Motor neuron (in vitro differentiated cells): ENCODE measurements at regions of chr5 and their contacts with region 1.

Region 1: GRCh38 chr5:172958331-172959046 is 735 bp upstream of the RPL26L1 start:
- ATAC-seq: peak; percentile 37 to 69 (median 58)
- H3K4me3 ChIP-seq: peak overlapping the region; percentile 56 to 90 (median 74)
- H3K27ac ChIP-seq: peak overlapping the region; percentile 28 to 56
- H3K4me1 ChIP-seq: peaks cover 5 to 7% of the 10 kb centered on the region in 2 donors

Region 2: DNA sequence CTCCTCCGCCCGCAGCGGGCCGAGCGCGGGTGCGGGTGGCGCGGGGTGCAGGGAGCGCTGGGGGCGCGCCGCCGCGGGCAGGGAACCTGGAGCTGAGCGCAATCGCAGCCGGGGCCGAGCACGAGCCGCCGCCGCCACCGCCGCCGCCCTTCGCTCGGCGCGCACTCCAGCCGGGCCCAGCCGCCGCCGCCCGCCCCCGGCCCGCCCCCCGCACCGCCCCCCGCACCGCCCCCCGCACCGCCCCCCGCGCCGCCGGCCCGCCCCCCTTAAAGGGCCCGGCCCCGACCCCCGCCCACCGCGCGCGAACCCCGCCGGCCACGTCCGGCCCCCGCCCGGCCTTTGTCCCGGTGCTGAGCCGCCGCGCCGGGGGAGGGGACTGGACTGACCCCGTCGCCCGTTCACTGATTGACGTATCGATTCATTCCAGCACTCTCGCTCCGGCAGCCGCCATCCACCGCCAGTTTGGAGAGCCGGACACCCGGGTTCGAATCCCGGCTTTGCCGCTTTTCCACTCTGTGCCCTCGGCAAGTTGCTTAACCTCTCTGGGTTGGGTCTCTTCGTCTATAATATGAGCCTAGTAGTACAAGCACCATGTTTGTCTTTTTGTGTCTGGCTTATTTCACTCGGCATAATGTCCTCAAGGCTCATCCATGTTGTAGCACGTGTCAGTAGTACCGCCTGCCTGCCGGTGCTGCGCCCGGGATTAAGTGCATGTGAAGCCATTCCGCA is 504.0 kb before region 1 on chr5 and contains the start of gene SH3PXD2B:
- in situ Hi-C with region 1: loop called in 1 of 9 experiments (anchors 25 kb)
- ATAC-seq: peak; percentile 22 to 75 (median 72)
- H3K4me3 ChIP-seq: peak within 1 kb of the TSS; percentile 69 to 99 (median 76)
- H3K27ac ChIP-seq: peak within 1 kb of the TSS; percentile 71 to 91
- H3K4me1 ChIP-seq: peaks cover 33 to 38% of the 10 kb centered on the region in 2 donors
- total RNA-seq, gene SH3PXD2B: 18.0 to 35.7 (median 24.3) TPM

Region 3: GRCh38 chr5:172758083-172758833 is 200.2 kb before region 1 on chr5:
- in situ Hi-C with region 1: no loop called
- ATAC-seq: peak; percentile 42 to 99 (median 92)
- H3K4me3 ChIP-seq: no peak overlapping the region
- H3K27ac ChIP-seq: no peak overlapping the region
- H3K4me1 ChIP-seq: peaks cover 8 to 9% of the 10 kb centered on the region in 2 donors

Region 4: GRCh38 chr5:173331956-173332479 is 373.5 kb after region 1 on chr5:
- in situ Hi-C with region 1: loop called in 1 of 9 experiments (anchors 25 kb)
- ATAC-seq: peak; percentile 26 to 72 (median 38)
- H3K4me3 ChIP-seq: no peak overlapping the region
- H3K27ac ChIP-seq: no peak overlapping the region
- H3K4me1 ChIP-seq: peaks cover 9 to 11% of the 10 kb centered on the region in 2 donors

Region 5: GRCh38 chr5:173412566-173412965 is 454.1 kb after region 1 on chr5:
- in situ Hi-C with region 1: no loop called
- ATAC-seq: no peak
- H3K4me3 ChIP-seq: no peak overlapping the region
- H3K27ac ChIP-seq: no peak overlapping the region
- H3K4me1 ChIP-seq: no peaks in the 10 kb centered on the region